Body of pancreas (tissue), 4 donors: ENCODE measurements at regions of chr4 and their contacts with region 1.

Region 1: GRCh38 chr4:53601251-53601764 is 10.0 kb upstream of the LNX1 start:
- DNase-seq: peak; percentile 47 to 72 (median 60)
- ATAC-seq: peak; percentile 51
- H3K4me3 ChIP-seq: no peak overlapping the region
- H3K27ac ChIP-seq: no peak overlapping the region
- H3K4me1 ChIP-seq: peaks cover 20% of the 10 kb centered on the region
- H3K27me3 ChIP-seq: no peaks in the 10 kb centered on the region
- CTCF ChIP-seq: peak in 5 of 7 experiments; percentile 9 to 34 (median 26)
- POLR2A ChIP-seq: no peak

Region 2: DNA sequence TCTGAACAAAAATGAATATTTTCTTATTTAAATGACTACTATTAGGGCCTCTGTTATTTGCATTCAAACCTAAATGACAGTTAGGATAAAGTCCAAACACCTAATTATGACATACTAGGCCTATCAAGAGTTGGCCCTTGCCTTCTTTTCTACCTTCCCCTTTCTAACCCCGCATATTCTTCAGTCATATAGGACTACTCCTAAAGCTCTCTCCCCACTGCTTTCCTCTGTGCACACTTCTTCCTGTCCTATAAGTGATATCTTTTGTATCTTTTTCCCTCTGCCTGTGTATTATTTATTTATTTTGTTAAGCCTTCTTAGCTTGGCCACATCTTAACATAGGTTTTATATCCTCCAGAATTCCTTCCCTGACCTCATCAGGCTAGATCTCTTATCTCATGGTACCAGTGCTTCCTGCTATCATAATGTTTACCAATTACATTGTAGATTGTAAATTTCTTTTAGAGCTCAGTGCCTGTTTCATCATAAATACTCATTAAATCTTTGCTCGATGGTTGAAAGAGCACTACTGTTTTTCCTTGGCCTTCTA is 872.5 kb before region 1 on chr4:
- intact Hi-C with region 1: no loop called
- DNase-seq: no peak
- ATAC-seq: no peak
- H3K4me3 ChIP-seq: no peak overlapping the region
- H3K27ac ChIP-seq: no peak overlapping the region
- H3K4me1 ChIP-seq: no peaks in the 10 kb centered on the region
- H3K27me3 ChIP-seq: no peaks in the 10 kb centered on the region
- CTCF ChIP-seq: no peak
- POLR2A ChIP-seq: no peak

Region 3: DNA sequence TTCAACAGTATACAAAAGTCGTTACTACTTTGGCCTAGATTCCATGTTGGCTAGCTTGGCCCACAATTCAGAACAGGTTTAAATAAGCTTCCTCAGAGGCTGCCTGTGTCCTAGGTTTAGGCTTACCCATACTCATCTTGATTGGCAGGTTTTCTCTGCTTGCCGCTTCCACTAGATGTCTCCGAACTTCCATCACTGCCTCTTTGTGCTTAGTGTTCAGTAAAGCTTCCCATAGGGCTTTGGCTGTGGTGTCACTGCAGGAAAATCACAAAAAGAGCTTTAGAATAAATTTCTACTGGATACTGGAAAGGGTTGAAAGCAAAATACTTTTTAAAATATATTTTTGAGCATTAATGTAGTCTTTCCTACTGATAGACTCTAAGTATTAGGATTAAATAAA is 287.8 kb before region 1 on chr4:
- intact Hi-C with region 1: no loop called
- DNase-seq: no peak
- ATAC-seq: no peak
- H3K4me3 ChIP-seq: no peak overlapping the region
- H3K27ac ChIP-seq: no peak overlapping the region
- H3K4me1 ChIP-seq: no peaks in the 10 kb centered on the region
- H3K27me3 ChIP-seq: no peaks in the 10 kb centered on the region
- CTCF ChIP-seq: no peak
- POLR2A ChIP-seq: no peak

Region 4: DNA sequence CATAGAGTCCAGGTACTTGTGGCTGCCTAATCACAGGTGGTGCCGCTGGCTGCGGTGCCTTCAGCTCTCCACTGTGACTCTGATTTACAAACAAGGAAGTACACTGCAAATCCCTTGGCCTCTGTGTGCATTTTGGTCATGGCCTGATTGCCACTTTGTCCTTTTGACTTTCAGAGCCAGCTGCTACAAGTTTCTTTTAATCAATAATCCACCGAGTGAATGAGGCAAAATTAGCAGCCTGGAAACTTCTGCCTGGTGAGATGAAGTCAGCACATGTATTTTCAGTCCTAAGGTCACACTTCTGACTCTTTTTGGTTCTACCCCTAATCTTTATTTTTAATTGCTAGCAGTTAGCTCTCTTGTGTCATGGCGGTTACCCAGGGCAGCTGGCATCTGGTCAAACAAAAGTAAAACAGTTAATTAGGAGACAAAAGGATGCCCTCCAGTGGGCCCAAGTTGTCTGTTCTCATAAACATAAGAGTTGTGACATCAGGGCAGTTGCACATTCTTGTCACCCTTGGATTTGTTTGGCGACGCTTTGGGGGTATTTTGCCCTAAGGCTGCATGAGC is 52.3 kb after region 1 on chr4:
- intact Hi-C with region 1: loop called (anchors 10 kb)
- DNase-seq: peak; percentile 70 to 89 (median 77)
- ATAC-seq: peak; percentile 82
- H3K4me3 ChIP-seq: no peak overlapping the region
- H3K27ac ChIP-seq: peak overlapping the region; percentile 64 to 91 (median 83)
- H3K4me1 ChIP-seq: peaks cover 40% of the 10 kb centered on the region
- H3K27me3 ChIP-seq: no peaks in the 10 kb centered on the region
- CTCF ChIP-seq: peak in 1 of 7 experiments; percentile 22
- POLR2A ChIP-seq: peak in 2 of 3 donors; percentile 37